ENCODE measurements at regions of chr5 and their contacts with region 1.

Region 1: DNA sequence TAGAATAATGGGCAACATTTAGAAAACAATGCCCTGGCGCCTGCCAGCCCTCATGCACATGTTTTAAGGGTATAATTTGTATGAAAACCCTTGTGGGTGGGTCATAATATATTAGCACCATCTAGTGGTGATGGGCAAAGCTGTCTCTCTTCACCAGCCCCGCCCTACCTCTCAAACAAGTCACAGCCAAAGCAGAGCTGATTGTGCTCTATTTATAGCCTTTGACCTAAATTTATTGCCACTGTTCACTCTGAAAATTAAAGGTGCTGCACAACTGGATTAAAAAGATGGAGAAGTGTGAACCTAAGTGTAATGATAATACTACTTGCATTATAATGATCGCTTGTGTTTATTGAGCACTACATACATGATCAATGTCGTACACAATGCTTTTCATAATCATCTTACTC is 131.9 kb upstream of the ANKH start:
- DNase-seq: no peak
- ATAC-seq: peak; percentile 88

Region 2: DNA sequence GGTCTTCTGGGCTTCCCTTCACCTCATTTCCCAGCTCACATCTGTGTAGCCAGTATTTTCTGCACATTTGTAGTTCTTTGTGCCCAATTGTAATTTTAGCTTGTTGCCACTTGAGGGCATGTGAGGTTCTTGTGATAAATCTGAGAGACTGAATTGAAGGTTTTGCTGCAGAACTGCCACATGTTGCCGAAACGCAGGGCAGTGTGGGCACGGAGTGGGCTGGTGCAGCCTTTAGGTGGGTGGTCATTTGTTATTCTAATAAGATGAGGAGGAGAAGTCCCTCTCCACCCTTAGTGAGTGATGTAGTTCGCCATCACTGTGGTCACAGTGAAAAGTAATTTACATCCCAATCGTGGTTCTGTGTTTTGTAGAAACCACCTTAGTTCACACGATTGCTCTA is 317.8 kb before region 1 on chr5:
- intact Hi-C with region 1: loop called (anchors 2 kb)
- DNase-seq: no peak
- ATAC-seq: peak; percentile 38

Region 3: DNA sequence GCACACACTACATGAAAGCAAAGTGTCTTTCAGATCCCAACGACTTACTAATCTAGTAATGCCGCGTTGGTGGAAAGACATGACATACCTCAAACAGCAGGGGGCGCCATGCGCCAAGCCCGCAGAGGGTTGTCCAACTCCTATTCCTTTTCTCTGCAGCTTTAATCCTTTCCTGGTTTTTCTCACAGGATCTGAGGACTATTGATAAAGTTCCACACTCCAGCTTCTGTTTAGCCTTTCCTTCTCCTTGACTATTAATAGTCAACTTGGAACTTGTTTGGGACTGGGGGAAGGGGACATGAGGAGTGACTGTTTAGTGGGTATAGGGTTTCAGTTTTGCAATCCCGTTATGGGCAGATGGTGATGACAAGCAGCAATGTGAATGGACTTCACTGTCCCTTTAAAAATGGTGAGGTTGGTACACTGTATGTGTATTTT is 276.1 kb before region 1 on chr5:
- intact Hi-C with region 1: loop called (anchors 1 kb)
- DNase-seq: peak; percentile 89
- ATAC-seq: peak; percentile 76

Region 4: DNA sequence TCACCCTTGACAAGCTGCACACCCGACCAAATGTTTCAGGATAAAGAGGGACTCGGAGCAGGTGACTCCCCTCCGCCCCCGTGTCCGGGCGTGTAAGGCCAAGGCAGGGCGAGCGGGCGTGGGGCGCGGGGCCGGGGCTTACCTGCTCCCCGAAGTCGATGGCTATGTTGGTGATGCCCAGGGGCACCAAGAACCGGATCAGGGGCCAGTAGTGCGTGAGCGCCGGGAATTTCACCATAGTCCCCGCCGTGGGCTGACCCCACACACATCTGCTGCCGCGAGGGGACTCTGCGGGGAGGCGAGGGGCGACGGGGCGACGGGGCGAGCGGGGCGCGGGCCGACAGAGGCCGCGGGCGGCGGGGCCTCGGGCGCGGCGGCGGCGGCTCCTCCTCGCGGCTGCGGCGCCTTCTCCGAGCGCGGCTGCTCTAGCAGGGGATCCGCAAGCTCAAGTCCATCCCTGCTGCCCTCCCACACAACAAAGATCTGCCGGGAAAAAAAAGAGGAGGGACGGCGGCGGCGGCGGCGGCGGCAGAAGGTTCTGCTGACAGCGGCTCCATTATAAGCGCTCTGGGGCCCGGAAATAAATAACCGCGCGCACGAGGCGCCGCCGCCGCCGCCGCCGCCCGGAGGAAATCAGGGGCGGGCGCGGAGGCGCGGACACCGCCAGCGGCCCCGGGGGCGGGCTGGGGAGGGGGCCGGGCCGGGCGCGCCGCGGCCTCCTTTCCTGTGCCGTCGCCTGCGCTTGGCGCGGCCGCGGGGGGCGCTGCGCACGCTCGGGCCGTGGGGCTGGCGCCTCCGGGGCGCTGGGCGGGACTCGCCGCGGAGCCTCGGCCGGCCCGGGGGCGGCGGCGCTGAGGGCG is 132.1 kb before region 1 on chr5 and contains the start of gene ANKH:
- intact Hi-C with region 1: loop called (anchors 2 kb)
- DNase-seq: peak; percentile 92
- ATAC-seq: peak; percentile 93
- total RNA-seq, gene ANKH: 156 TPM

Region 5: GRCh38 chr5:14946815-14947640 is 56.5 kb before region 1 on chr5:
- intact Hi-C with region 1: loop called (anchors 5 kb)
- DNase-seq: no peak
- ATAC-seq: peak; percentile 68

Measured in Right ventricle myocardium inferior (tissue), 1 donor.